Kidney (tissue), 22 donors: ENCODE measurements at regions of chr5 and their contacts with region 1.

Region 1: DNA sequence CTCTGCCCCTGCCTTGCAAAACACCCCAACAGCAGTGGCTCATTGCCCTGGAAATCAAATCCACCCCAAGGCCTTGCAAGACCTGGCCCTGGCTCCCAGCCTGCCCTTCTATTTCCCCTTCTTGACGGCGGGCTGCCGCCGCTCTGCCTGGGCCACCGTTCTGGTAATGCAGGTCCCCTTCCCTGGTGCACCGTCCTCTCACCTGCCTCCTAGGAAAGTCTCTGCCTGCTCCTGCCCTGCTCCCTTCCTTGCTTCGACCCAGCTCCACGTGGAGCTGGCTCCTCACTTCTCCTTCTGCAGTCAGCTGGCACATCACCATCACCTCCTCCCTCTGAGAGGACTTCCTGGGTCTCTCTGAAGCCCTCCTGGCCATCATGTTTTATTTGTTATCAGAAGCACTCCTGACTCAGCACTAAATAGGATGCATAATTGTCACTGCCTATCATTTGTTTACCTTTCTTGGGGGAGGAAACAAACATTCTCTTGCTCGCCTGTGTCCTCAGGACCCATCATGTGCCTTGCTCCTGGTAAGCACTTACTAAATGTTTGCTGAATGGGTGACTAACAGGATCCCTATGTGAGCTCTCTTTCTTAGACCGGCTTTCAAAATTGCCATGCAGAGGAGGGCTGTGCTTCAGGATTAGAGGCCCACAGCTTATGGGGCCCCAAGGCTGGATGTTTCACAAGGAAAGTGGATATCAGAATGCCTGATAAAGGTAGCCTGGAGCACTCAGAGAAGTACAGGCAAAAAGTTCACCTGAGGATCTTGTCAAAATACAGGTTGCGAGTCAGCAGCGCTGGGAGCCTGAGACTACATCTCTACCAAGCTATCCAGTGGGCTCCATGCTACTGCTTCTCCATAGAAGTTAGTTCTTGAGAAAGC is 19.6 kb upstream of the C5orf47 start:
- DNase-seq: peak in 1 of 5 donors; percentile 65
- H3K4me3 ChIP-seq: no peak overlapping the region
- H3K27ac ChIP-seq: peak overlapping the region; percentile 11 to 19
- H3K4me1 ChIP-seq: peaks cover 0 to 10% (median 0%) of the 10 kb centered on the region in 3 donors
- H3K27me3 ChIP-seq: no peaks in the 10 kb centered on the region
- CTCF ChIP-seq: no peak

Region 2: DNA sequence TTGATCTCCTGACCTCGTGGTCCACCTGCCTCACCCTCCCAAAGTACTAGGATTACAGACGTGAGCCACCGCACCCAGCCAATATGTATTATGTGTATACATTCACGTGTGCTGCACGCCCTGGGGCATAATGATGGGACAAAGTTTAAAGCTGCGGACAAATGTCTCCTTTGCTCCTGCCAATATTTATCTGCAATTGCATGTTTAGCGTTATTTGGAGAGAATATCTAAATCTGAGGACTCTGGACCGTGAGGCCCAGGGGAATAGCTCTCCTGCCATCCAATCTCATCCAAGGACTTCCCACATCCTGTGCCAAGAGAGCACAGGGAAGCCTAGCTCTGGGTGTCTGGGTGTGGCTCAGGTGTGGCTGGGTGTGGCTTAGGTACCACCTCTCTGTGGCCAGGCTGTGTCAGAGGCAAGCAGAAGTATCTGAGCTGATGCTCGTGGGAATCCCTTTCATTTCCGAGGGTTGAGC is 346.1 kb before region 1 on chr5:
- intact Hi-C with region 1: loop called (anchors 5 kb)
- DNase-seq: no peak
- H3K4me3 ChIP-seq: no peak overlapping the region
- H3K27ac ChIP-seq: peak overlapping the region in 1 of 2 donors; percentile 14
- H3K4me1 ChIP-seq: peaks cover 0 to 22% (median 10%) of the 10 kb centered on the region in 3 donors
- H3K27me3 ChIP-seq: no peaks in the 10 kb centered on the region
- CTCF ChIP-seq: no peak